ENCODE measurements at regions of chr16 and their contacts with region 1.

Region 1: DNA sequence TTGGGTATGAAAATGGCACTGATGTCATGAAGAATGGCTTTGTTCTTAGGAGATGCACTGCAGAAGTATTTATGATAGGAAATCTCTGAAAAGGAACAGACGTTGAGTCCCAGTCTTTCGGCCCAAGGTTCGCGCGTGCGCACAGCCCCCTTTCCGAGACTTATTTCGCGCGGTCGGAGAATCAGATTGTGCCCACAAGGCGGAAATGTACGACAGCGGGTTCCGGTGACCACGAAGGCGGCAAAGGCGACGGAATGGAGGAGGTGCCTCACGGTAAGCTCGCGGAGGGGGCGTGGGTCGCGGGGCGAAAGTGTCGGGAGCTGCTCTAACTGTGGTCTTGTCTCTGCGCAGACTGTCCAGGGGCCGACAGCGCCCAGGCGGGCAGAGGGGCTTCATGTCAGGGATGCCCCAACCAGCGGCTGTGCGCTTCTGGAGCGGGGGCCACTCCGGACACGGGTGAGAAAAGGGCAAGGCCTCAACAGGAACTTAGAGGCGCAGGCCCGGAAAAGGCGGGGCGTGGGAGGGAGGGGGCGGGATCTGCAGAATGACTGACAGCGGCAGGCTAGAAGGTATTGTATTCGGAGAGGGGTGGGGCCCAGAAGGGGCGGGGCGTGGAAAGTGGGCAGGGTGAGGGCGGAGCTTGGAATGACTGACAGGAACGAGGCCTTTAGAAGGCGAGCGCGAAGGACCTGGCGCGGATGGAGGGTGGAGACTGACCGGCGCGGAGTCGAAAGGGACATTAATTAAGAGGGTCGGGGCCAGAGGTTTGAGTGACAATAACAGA is at the start of gene NUBP1:
- DNase-seq: peak; percentile 100
- H3K4me3 Mint-ChIP-seq: peak within 1 kb of the TSS; percentile 94
- H3K27ac Mint-ChIP-seq: peak within 1 kb of the TSS; percentile 99
- H3K4me1 Mint-ChIP-seq: peaks cover 37% of the 10 kb centered on the region
- H3K27me3 Mint-ChIP-seq: no peaks in the 10 kb centered on the region
- total RNA-seq, gene NUBP1: 26.5 to 31.5 TPM

Region 2: GRCh38 chr16:10385725-10386516 is 357.9 kb before region 1 on chr16 and contains the start of gene ATF7IP2:
- CTCF ChIA-PET with region 1: no interaction called
- POLR2A ChIA-PET with region 1: no interaction called
- intact Hi-C with region 1: loop called (anchors 10 kb)
- DNase-seq: peak; percentile 94
- H3K4me3 Mint-ChIP-seq: peak within 1 kb of the TSS; percentile 97
- H3K27ac Mint-ChIP-seq: peak within 1 kb of the TSS; percentile 93
- H3K4me1 Mint-ChIP-seq: peaks cover 41% of the 10 kb centered on the region
- H3K27me3 Mint-ChIP-seq: no peaks in the 10 kb centered on the region
- total RNA-seq, gene ATF7IP2: 14.7 to 15.1 TPM

Region 3: DNA sequence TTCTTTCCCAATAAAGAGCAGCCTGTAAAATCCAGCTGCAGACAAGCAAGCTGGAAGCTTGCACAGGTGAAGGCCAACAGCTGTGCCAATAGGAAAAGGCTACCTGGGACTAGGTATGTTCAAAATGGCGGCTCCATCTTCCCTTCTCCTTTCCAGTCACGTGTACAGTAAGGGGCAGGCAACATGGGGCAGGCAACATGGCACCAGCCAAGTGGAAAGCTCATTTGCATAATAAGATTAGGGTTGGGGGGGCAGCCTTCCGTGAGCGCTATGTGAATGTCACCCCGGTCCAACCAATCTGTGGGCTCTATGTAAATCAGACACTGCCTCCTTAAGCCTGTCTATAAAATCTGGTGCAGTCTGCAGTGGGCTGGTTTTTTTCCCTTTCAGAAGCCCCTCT is 43.5 kb after region 1 on chr16:
- CTCF ChIA-PET with region 1: no interaction called
- POLR2A ChIA-PET with region 1: no interaction called
- intact Hi-C with region 1: no loop called
- DNase-seq: no peak
- H3K4me3 Mint-ChIP-seq: no peak overlapping the region
- H3K27ac Mint-ChIP-seq: no peak overlapping the region
- H3K4me1 Mint-ChIP-seq: no peaks in the 10 kb centered on the region
- H3K27me3 Mint-ChIP-seq: no peaks in the 10 kb centered on the region

Region 4: DNA sequence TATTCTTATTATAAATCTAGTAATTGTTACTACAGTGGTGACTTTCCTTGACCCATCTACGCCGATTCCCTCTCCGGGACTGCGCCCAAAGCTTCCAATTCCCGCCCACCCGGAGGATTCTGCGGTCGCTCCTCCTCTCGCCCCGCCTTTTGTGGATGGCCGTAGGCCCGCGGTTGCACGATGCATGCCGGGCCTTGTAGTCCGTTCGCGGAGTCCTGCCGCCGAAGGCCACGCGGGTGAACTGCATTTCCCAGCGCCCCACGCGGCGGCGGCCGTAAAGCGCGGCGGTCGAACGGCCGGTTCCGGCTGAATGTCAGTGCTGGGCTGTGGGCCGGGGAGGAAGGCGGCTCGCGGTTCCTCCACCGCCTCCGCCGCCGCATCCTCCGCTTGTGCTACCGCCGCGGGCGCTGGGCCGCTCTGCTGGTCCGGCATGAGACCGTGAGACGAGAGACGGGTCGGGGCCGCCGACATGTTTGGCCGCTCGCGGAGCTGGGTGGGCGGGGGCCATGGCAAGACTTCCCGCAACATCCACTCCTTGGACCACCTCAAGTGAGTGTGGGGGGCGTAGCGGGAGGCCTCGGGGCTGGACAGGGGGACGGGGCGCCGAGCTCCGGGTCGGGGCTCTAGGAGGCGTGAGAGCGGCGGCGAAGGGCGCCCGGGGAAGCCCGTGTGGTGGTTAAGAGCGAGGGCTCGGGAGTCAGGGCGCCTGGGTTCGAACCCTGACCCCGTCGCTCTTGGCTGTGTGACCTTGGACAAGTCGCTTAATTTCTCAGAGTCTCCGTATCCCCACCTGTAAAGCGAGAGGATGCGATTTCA is 200.7 kb after region 1 on chr16 and contains the start of gene CLEC16A:
- CTCF ChIA-PET with region 1: no interaction called
- POLR2A ChIA-PET with region 1: interaction called, 6 read pairs
- intact Hi-C with region 1: loop called (anchors 2 kb)
- DNase-seq: peak; percentile 97
- H3K4me3 Mint-ChIP-seq: peak within 1 kb of the TSS; percentile 85
- H3K27ac Mint-ChIP-seq: peak within 1 kb of the TSS; percentile 57
- H3K4me1 Mint-ChIP-seq: peaks cover 60% of the 10 kb centered on the region
- H3K27me3 Mint-ChIP-seq: no peaks in the 10 kb centered on the region
- total RNA-seq, gene CLEC16A: 25.5 to 26.7 TPM